ENCODE measurements at regions of chr16 and their contacts with region 1.

Region 1: DNA sequence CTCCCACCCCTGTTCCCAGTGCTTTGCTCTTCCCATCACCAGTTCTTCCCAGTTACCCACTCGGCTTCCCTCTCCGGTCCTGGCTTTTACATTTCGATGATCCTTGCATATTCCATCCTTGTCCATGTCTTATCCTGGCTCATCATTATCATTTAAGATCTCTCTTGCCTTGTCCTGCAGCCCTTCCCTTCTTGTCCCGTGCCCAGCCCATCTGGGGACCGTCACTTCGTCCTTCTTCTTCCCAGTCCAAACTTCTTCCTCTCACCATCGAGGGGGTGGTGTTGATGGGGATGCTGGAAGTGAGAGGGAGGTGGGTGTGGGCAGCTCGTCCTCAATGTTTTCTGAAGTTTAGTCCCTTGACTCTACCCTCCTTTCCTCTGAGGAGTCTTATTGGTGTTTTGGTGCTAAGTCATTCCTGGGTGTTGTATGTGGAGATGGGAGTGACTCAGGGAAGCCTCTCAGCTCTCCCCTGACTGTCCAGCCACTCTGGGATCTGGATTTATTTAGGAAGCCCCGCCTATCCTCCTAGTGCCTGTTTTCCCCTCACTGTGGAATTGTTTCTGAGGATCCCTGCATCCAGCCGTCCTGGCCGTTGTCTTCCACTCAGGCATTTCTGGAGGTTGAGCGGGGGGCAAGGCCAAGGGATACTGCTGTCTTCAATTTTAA is 975 bp downstream of the SNX29 start:
- DNase-seq: peak; percentile 82
- ATAC-seq: peak; percentile 85
- H3K4me3 ChIP-seq: peak overlapping the region; percentile 100
- H3K27ac ChIP-seq: peak overlapping the region; percentile 79
- H3K4me1 ChIP-seq: peaks cover 3% of the 10 kb centered on the region; the same call in 1 of the 2 replicates
- H3K27me3 ChIP-seq: no peaks in the 10 kb centered on the region
- CTCF ChIP-seq: no peak
- POLR2A ChIP-seq: 0 out of 2 replicates have a peak, but pooled peaks have one; percentile 25
- RAD21 ChIP-seq: no peak

Region 2: DNA sequence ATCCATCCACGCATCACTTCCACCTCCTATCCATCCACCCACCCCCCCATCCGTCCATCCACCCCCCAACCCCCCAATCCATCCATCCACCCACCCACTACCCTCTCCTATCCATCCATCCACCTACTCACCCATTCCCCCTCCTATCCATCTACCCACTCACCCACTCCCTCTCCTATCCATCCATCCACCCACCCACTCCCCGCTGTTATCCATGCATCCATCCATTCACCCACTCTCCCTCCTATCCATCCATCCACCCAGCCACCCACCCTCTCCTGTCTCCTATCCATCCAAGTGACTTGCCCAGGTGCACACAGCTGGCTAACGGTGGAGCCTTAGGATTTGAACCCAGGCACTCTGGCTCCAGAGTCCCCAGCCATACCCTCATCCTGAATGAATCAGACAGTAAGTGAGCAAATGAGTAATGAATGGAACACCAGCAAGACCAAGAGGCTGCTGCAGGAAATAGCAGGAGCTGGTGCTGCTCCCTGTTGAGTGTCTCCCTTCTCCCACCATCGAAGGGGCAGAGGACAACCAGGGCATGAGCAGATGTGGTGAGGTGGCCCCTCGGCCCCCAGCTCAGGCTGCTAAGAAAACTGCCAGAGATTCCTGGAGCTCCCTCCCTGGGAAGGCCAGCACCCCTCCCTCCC is 453.3 kb before region 1 on chr16:
- CTCF ChIA-PET with region 1: no interaction called
- POLR2A ChIA-PET with region 1: no interaction called
- dilution Hi-C with region 1: no loop called
- in situ Hi-C with region 1: no loop called
- intact Hi-C with region 1: no loop called
- DNase-seq: no peak
- ATAC-seq: no peak; the same call in 1 of the 2 replicates
- H3K4me3 ChIP-seq: no peak overlapping the region
- H3K27ac ChIP-seq: no peak overlapping the region
- H3K4me1 ChIP-seq: no peaks in the 10 kb centered on the region
- H3K27me3 ChIP-seq: peaks cover 15% of the 10 kb centered on the region
- CTCF ChIP-seq: peak; percentile 28; the same call in 1 of the 2 replicates
- POLR2A ChIP-seq: no peak
- RAD21 ChIP-seq: peak; percentile 29; the same call in 1 of the 2 replicates

Region 3: GRCh38 chr16:11851294-11852091 is 126.0 kb before region 1 on chr16 and contains the start of gene RSL1D1:
- CTCF ChIA-PET with region 1: no interaction called
- POLR2A ChIA-PET with region 1: no interaction called
- dilution Hi-C with region 1: no loop called
- in situ Hi-C with region 1: no loop called
- intact Hi-C with region 1: loop called (anchors 10 kb)
- DNase-seq: peak; percentile 91
- ATAC-seq: peak; percentile 86
- H3K4me3 ChIP-seq: peak within 1 kb of the TSS; percentile 78
- H3K27ac ChIP-seq: peak within 1 kb of the TSS; percentile 89
- H3K4me1 ChIP-seq: peaks cover 4% of the 10 kb centered on the region
- H3K27me3 ChIP-seq: no peaks in the 10 kb centered on the region
- CTCF ChIP-seq: no peak
- POLR2A ChIP-seq: peak; percentile 86
- RAD21 ChIP-seq: no peak
- total RNA-seq, gene RSL1D1: 77.4 and 137 TPM in 2 replicates

Region 4: DNA sequence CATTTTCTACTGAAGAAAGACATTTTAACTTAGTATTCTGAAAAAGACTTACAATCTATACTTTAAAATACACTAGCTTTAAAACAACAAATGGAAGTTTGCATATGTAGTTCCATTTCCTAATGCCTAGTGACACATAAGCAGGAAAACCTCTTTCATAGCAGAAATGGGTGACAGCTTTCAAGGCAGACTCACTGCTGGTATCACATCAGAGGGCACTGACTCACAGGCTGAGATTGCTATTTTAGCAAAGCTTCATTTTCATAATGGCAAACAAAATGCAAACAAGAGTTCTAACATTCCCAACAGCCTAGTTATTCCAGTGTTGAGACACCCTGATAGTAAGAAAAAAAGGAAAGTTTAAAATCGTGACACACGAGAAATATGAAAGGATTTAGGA is 80.7 kb before region 1 on chr16:
- CTCF ChIA-PET with region 1: no interaction called
- POLR2A ChIA-PET with region 1: no interaction called
- dilution Hi-C with region 1: no loop called
- in situ Hi-C with region 1: no loop called
- intact Hi-C with region 1: loop called (anchors 10 kb)
- DNase-seq: peak; percentile 92
- ATAC-seq: peak; percentile 94
- H3K4me3 ChIP-seq: no peak overlapping the region
- H3K27ac ChIP-seq: peak overlapping the region; percentile 28; the same call in 1 of the 2 replicates
- H3K4me1 ChIP-seq: peaks cover 4% of the 10 kb centered on the region
- H3K27me3 ChIP-seq: no peaks in the 10 kb centered on the region
- CTCF ChIP-seq: no peak
- POLR2A ChIP-seq: no peak
- RAD21 ChIP-seq: no peak

Region 5: DNA sequence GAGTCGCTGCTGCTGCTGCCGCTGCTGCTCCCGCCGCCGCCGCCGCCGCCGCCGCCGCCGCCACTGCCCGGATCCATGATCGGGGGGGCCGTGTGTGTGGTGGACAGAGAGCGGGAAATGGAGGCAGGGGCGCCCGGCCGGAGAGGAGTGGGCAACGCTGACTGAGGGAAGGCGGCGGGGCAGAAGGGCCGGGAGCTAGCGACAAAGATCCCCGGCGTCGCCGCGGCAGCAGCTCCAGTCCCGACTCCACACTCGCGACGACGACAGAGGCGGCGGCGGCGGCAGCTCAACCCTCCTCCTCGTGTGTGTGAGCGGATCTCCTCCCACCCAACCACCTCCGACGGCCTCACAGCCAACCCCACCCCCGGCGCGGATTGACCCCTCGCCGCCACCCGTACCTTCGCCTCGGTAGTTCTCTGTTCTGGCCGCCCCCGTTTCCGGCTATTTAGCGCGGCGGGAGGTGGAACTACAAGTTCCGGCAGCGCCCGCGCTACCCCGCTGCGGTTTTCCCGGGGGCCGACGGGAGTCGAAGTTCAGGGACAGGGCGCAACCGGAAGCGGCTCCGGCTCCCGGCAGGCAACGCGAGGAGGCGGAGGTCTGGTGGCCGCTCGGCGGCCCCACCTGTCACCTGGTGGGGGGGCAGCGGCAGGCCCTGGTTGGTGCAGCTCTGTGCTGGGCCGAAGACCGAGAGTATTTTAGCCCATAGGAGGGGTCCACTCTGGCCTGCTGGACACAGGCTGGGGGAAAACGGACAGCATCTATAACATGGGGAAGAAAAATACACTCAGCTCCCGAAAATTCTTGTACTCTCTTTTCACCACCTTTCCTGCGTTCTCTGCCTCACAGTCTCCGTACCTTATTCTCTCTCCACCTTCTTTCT is 61.6 kb before region 1 on chr16 and contains the start of gene GSPT1:
- CTCF ChIA-PET with region 1: no interaction called
- POLR2A ChIA-PET with region 1: no interaction called
- dilution Hi-C with region 1: no loop called
- in situ Hi-C with region 1: no loop called
- intact Hi-C with region 1: loop called (anchors 5 kb)
- DNase-seq: peak; percentile 97
- ATAC-seq: peak; percentile 96
- H3K4me3 ChIP-seq: peak within 1 kb of the TSS; percentile 94
- H3K27ac ChIP-seq: peak within 1 kb of the TSS; percentile 87
- H3K4me1 ChIP-seq: peaks cover 8% of the 10 kb centered on the region
- H3K27me3 ChIP-seq: peaks cover 7% of the 10 kb centered on the region
- CTCF ChIP-seq: no peak
- POLR2A ChIP-seq: peak; percentile 85
- RAD21 ChIP-seq: no peak
- total RNA-seq, gene GSPT1: 84.8 and 121 TPM in 2 replicates

Region 6: DNA sequence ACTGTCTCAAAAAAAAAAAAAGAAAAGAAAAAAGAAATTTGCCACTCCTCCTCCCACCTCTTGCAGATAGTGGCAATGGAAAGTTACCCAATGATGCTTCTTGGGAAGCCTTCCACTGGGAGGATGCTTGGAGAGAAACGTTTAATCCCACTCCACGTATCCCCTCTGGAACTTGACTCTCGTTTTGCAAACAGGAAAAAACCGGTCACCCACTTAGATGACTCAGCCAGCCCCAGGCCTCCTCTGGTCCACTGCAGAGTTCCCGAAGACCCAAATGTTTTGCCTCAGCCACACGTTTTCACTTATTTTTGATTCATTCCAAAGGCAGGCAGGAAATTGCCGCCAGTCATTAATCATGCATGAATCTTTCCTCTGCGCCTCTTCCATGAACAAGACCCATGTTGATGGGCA is 21.8 kb before region 1 on chr16:
- CTCF ChIA-PET with region 1: no interaction called
- POLR2A ChIA-PET with region 1: interaction called, 5 read pairs
- dilution Hi-C with region 1: no loop called
- in situ Hi-C with region 1: no loop called
- intact Hi-C with region 1: loop called (anchors 2 kb)
- DNase-seq: peak; percentile 98
- ATAC-seq: peak; percentile 93
- H3K4me3 ChIP-seq: no peak overlapping the region
- H3K27ac ChIP-seq: peak overlapping the region; percentile 92
- H3K4me1 ChIP-seq: peaks cover 5% of the 10 kb centered on the region
- H3K27me3 ChIP-seq: no peaks in the 10 kb centered on the region
- CTCF ChIP-seq: no peak
- POLR2A ChIP-seq: no peak
- RAD21 ChIP-seq: no peak

Region 7: GRCh38 chr16:12017558-12017957 is 40.0 kb after region 1 on chr16:
- CTCF ChIA-PET with region 1: no interaction called
- POLR2A ChIA-PET with region 1: interaction called, 7 read pairs
- dilution Hi-C with region 1: no loop called
- in situ Hi-C with region 1: no loop called
- intact Hi-C with region 1: loop called (anchors 5 kb)
- DNase-seq: peak; percentile 80
- ATAC-seq: peak; percentile 94
- H3K4me3 ChIP-seq: no peak overlapping the region
- H3K27ac ChIP-seq: peak overlapping the region; percentile 72; the same call in 1 of the 2 replicates
- H3K4me1 ChIP-seq: peaks cover 10% of the 10 kb centered on the region
- H3K27me3 ChIP-seq: no peaks in the 10 kb centered on the region
- CTCF ChIP-seq: no peak
- POLR2A ChIP-seq: no peak
- RAD21 ChIP-seq: no peak

Region 8: GRCh38 chr16:12057266-12057665 is 79.8 kb after region 1 on chr16:
- CTCF ChIA-PET with region 1: no interaction called
- POLR2A ChIA-PET with region 1: no interaction called
- dilution Hi-C with region 1: no loop called
- in situ Hi-C with region 1: loop called (anchors 5 kb)
- intact Hi-C with region 1: loop called (anchors 1 kb)
- DNase-seq: peak; percentile 70
- ATAC-seq: peak; percentile 85
- H3K4me3 ChIP-seq: no peak overlapping the region
- H3K27ac ChIP-seq: no peak overlapping the region; the same call in 1 of the 2 replicates
- H3K4me1 ChIP-seq: peaks cover 10% of the 10 kb centered on the region
- H3K27me3 ChIP-seq: no peaks in the 10 kb centered on the region
- CTCF ChIP-seq: no peak
- POLR2A ChIP-seq: no peak
- RAD21 ChIP-seq: no peak

Region 9: DNA sequence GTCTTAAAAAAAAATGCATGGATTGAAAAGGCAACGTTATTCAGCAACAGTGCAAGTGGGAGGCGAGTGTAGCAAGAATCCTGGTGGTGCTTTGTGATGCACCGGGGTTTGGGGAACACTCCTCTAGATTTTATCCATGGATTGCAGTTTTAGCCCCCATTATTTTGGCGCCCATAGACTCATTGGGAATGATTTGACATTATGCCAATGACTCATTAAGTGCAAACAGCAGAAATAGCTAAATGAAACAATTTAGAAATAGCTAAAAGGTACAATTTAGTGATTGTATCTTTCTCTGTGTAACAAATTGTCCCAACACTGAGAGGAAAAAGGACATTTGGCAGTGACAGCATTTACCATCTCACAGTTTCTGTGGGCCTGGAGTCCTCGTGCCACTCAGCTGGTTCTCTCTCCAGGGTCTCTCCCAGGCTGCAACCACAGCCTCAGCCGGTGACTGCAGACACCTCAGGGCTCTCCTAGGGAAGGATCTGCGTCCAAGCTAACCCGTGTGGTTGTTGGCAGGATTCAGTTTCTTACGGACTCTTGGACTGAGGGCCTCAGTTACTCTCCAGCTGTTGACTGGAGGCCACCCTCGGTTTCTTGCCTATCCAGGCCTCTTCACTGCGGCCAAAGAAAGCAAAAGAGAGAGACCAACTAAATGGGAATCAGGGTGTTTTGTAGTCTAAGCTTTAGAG is 397.7 kb after region 1 on chr16:
- CTCF ChIA-PET with region 1: no interaction called
- POLR2A ChIA-PET with region 1: no interaction called
- dilution Hi-C with region 1: no loop called
- in situ Hi-C with region 1: no loop called
- intact Hi-C with region 1: no loop called
- DNase-seq: no peak
- ATAC-seq: no peak
- H3K4me3 ChIP-seq: no peak overlapping the region
- H3K27ac ChIP-seq: no peak overlapping the region
- H3K4me1 ChIP-seq: no peaks in the 10 kb centered on the region; the same call in 1 of the 2 replicates
- H3K27me3 ChIP-seq: no peaks in the 10 kb centered on the region
- CTCF ChIP-seq: no peak
- POLR2A ChIP-seq: no peak
- RAD21 ChIP-seq: no peak

Measured in IMR-90 (cell line).